Aorta (tissue), 5 donors: ENCODE measurements at regions of chr18 and their contacts with region 1.

Region 1: DNA sequence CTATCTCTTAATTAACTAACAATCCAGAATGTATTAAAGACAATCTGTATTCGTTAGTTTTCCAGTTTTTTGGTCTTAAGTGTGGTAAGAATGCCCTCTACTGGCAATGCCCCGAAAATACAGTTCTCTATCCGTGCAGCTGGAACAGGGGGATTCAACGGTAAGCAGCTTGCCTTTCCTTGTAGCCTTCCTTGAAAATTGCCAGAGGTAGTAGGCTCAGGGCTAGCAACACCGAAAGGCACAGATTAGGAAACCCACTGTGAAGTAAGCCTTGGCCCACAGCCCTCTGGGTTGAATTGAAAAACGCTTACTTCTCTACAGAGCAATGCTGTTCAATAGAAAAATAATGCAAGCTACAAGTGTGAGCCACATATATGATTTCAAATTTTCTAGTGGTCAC is 17.1 kb upstream of the VPS4B start:
- DNase-seq: no peak
- ATAC-seq: peak; percentile 89
- H3K4me3 ChIP-seq: no peak overlapping the region
- H3K27ac ChIP-seq: no peak overlapping the region
- H3K4me1 ChIP-seq: no peaks in the 10 kb centered on the region
- H3K27me3 ChIP-seq: no peaks in the 10 kb centered on the region

Region 2: GRCh38 chr18:63016270-63016669 is 423.1 kb before region 1 on chr18:
- intact Hi-C with region 1: loop called (anchors 2 to 5 kb)
- DNase-seq: no peak
- ATAC-seq: peak; percentile 83
- H3K4me3 ChIP-seq: no peak overlapping the region
- H3K27ac ChIP-seq: no peak overlapping the region
- H3K4me1 ChIP-seq: no peaks in the 10 kb centered on the region
- H3K27me3 ChIP-seq: no peaks in the 10 kb centered on the region

Region 3: DNA sequence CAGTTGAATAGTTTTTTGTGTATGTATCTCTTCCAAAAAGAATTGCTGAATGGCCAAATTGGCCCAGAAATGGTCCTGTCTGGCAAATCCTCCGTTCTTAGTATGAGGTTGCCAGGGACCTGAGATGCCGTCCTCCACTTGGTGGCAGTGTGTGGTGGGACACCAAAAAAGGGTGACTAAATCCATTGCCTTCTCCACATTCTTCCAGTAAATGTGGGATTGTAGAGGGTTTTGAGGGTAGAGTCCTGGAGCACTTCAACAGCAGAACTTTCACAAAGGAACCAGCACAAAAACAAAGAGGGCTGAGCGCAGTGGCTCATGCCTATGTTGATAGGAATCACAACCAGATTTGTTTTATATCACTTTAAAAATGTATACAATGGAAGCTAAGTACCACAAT is 319.7 kb before region 1 on chr18:
- intact Hi-C with region 1: loop called (anchors 2 to 10 kb)
- DNase-seq: no peak
- ATAC-seq: peak; percentile 72
- H3K4me3 ChIP-seq: no peak overlapping the region
- H3K27ac ChIP-seq: no peak overlapping the region
- H3K4me1 ChIP-seq: no peaks in the 10 kb centered on the region
- H3K27me3 ChIP-seq: no peaks in the 10 kb centered on the region

Region 4: DNA sequence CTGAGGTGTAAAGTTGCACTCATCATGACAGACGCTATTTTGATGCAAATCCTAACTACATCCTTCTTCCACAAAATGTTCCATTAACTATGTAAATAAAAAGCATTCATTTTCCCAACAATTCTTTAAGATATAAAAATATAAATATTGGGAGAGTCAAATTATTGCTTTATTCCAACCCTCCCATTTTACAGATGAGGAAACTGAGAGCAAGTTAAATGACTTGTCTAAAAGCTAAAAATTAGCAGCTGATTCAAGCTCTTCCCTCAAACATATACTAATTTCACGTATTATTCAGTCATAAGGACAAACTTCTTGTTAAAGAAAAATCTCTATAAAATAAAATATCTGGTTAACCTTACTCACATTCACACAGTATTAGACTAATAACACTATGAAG is 89.1 kb before region 1 on chr18:
- intact Hi-C with region 1: loop called in 1 of 2 experiments (anchors 5 kb)
- DNase-seq: no peak
- ATAC-seq: no peak
- H3K4me3 ChIP-seq: no peak overlapping the region
- H3K27ac ChIP-seq: no peak overlapping the region
- H3K4me1 ChIP-seq: peaks cover 0 to 3% of the 10 kb centered on the region in 2 donors
- H3K27me3 ChIP-seq: no peaks in the 10 kb centered on the region

Region 5: DNA sequence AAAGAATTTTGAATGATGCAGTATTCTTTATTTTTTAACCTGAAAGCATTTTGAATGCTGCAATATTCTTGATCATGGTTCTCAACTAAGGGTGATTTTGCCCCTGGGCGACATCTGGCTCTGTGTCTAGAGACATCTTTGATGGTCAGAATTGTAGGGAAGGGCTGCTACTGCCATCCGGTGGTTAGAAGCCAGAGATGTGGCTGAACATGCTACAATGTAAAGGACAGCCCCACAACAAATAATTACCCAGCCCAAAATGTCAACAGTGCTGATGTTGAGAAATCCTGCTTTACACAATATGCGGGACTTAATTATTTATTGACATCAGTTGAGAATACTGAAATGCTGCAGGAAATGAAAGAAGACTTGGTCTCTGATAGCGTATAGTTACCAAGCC is 410.7 kb after region 1 on chr18:
- intact Hi-C with region 1: no loop called
- DNase-seq: no peak
- ATAC-seq: no peak
- H3K4me3 ChIP-seq: no peak overlapping the region
- H3K27ac ChIP-seq: no peak overlapping the region
- H3K4me1 ChIP-seq: no peaks in the 10 kb centered on the region
- H3K27me3 ChIP-seq: no peaks in the 10 kb centered on the region